ENCODE measurements at regions of chrX and their contacts with region 1.

Region 1: DNA sequence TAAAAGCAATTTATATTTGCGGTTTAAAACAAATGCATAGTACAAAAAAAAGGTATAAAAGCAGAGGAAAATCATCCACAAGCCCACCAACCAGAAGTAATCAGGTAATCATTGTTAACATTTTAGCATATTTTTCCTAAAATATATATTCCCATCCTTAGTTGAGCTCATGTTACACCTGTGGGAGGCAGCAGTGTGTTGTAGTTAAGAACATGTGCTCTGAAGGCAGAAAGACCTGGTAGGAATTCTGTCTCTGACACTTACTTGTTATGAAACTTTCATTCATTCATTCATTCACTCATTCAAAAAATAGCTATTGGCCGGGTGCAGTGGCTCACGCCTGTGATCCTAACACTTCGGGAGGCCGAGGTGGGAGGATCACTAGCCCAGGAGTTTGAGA is 15.4 kb upstream of the CDKL5 start:
- DNase-seq: peak; percentile 17 to 18
- H3K4me3 ChIP-seq: no peak overlapping the region
- H3K27ac ChIP-seq: no peak overlapping the region
- H3K4me1 ChIP-seq: no peaks in the 10 kb centered on the region
- H3K27me3 ChIP-seq: no peaks in the 10 kb centered on the region
- CTCF ChIP-seq: peak in 3 of 6 experiments; percentile 40 to 44 (median 42)
- POLR2A ChIP-seq: no peak

Region 2: DNA sequence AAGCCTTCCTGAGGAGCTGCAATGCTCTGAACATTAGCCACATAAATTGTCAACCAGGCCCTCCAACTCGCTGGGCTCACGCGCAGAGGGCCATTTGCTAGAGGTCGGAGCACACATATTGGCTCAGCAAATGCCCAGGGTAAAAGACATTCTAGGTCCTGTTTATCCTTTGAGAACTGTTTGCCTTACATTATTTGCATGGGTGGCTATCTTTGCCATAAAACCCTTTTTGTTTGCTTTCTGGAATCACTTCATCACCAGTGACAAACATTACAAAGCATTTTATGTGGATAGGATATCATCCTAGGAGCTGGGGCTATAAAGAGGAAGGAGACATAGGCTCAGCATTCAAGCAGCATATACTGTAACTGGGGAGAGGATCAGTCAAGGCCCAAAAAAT is 399.8 kb before region 1 on chrX:
- intact Hi-C with region 1: no loop called
- DNase-seq: no peak
- H3K4me3 ChIP-seq: no peak overlapping the region
- H3K27ac ChIP-seq: no peak overlapping the region
- H3K4me1 ChIP-seq: no peaks in the 10 kb centered on the region
- H3K27me3 ChIP-seq: no peaks in the 10 kb centered on the region
- CTCF ChIP-seq: no peak
- POLR2A ChIP-seq: no peak

Region 3: DNA sequence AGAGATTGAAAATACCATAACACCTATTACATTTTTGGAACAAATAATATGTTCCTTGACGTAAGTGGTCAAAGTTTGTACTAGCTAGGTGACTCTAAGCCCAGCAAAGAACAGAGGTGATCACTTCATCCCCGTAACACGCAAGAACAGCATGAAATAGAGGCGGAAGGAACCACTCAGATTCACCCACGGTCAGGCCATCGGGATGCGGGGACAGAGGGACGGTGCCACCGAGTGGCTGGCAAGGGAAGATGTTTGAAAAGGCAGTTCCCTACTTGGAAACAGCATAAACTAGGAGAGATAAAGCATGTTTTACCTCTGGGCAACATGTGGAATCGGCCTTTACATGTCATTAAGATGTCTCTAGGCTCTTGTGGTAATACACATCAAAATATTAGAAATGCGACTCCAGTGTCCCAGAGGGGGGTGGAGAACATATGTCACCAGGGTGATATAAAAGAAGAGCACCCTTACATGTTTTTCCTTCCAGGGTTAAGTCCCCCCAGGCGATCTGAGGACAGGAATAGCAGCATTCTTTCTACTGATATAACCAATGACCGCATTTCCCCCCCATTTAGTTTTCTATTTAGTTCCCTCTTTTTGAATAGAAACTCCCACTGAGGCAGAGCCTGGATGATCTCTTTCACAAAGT is 489.9 kb after region 1 on chrX:
- intact Hi-C with region 1: loop called (anchors 10 kb)
- DNase-seq: no peak
- H3K4me3 ChIP-seq: no peak overlapping the region
- H3K27ac ChIP-seq: no peak overlapping the region
- H3K4me1 ChIP-seq: no peaks in the 10 kb centered on the region
- H3K27me3 ChIP-seq: no peaks in the 10 kb centered on the region
- CTCF ChIP-seq: peak in 2 of 6 experiments; percentile 20 to 25
- POLR2A ChIP-seq: no peak

Measured in thyroid gland (tissue), 4 donors.